ENCODE measurements at regions of chr5 and their contacts with region 1.

Region 1: DNA sequence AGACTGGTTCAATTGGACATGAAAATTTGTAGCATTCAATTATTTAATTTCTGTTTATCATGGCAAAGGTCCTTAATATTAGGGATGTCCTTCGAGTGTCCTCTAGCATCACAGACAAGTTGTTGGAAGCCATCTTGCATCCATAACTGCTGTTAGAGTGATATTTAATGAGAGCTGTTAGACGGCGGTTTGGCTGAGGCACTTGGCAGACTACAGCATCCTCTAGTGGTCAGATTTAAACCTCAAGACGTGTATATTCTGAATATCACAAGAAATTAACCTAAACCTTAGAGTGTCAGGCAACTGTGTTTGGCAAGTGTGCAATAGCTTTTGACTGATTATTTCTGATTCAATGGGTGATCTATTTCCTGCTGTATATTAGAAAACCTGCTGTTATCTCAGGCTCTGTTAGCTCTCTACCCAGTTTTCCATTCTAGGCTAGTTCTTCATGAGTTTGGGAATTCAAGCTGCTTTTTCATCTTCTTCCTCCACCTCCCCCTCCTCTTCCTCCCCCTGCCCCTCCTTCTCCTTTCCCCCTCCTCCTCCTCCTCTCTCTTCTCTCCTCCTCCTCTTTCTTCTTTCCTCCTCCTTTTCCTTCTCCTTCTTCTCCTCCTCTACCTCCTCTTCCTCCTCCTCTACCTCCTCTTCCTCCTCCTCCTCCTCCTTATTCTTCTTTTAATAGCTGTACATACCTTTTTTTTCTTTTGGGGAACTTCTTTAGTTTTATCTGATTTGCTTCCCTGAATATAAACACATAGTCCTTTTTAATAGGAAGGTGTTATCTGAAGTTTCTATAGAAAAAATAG is 8.6 kb downstream of the SPINK1 start:
- DNase-seq: peak; percentile 44
- ATAC-seq: peak; percentile 83

Region 2: DNA sequence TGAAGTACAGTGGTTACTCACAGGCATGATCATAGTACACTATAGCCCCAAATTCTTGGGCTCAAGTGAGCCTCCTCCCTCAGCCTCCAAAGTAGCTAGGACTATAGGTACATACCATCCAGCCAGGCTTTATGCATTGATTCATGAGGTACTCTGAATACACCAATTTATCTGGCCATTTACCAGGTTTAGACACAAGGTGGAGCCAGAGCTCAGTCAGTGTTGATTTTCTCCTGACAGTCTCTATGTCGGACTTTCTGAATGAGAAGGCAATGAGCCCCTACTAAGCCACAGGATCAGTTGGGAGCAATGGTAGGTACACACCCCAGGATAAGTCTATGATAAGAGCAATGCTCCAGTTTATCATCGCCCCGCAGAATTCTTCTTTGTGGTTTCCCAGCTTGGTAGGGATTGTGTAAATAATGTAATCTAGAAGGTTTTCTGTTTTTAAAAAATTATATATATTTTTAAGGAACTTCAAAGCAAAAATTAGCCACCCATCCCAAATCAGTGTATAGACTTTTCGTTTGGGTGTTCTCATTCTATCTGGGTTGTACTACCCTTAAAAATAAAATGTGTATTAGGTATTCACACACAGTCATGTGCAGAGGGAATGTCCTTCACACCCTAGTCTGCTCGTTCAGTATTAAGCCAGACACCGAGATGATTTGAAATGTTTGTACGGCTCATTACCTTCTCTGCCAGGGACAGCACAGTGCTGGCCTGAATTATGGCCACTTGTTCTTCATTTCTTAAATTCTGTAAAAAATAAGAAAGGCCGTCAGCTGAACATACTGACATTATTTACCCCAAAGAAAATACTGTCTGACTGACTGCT is 194.6 kb before region 1 on chr5:
- intact Hi-C with region 1: loop called (anchors 2 kb)
- DNase-seq: no peak
- ATAC-seq: peak; percentile 88

Region 3: GRCh38 chr5:147658293-147658932 is 164.5 kb before region 1 on chr5:
- intact Hi-C with region 1: no loop called
- DNase-seq: no peak
- ATAC-seq: no peak

Measured in Right ventricle myocardium superior (tissue), 1 donor.